ENCODE measurements at regions of chr20 and their contacts with region 1.

Region 1: GRCh38 chr20:62772990-62773844 is 23.1 kb upstream of the MRGBP start:
- DNase-seq: peak; percentile 34
- H3K4me3 ChIP-seq: no peak overlapping the region
- H3K27ac ChIP-seq: no peak overlapping the region
- H3K4me1 ChIP-seq: peaks cover 11% of the 10 kb centered on the region
- H3K27me3 ChIP-seq: no peaks in the 10 kb centered on the region
- CTCF ChIP-seq: no peak
- POLR2A ChIP-seq: no peak

Region 2: GRCh38 chr20:62740286-62741141 is 32.7 kb before region 1 on chr20:
- CTCF ChIA-PET with region 1: no interaction called
- POLR2A ChIA-PET with region 1: no interaction called
- dilution Hi-C with region 1: no loop called
- intact Hi-C with region 1: loop called (anchors 1 kb)
- DNase-seq: peak; percentile 85
- H3K4me3 ChIP-seq: no peak overlapping the region
- H3K27ac ChIP-seq: peak overlapping the region; percentile 77
- H3K4me1 ChIP-seq: peaks cover 26% of the 10 kb centered on the region
- H3K27me3 ChIP-seq: no peaks in the 10 kb centered on the region
- CTCF ChIP-seq: no peak
- POLR2A ChIP-seq: peak; percentile 30

Measured in endothelial cell of umbilical vein (primary cell).